Colonic mucosa (tissue), 4 donors: ENCODE measurements at regions of chr12 and their contacts with region 1.

Region 1: GRCh38 chr12:21657326-21658077 is at the start of gene LDHB:
- DNase-seq: peak; percentile 97
- H3K4me3 ChIP-seq: peak within 1 kb of the TSS; percentile 85
- H3K27ac ChIP-seq: peak within 1 kb of the TSS; percentile 82
- H3K4me1 ChIP-seq: no peaks in the 10 kb centered on the region
- H3K27me3 ChIP-seq: no peaks in the 10 kb centered on the region
- CTCF ChIP-seq: no peak
- total RNA-seq, gene LDHB: 330 to 565 TPM

Region 2: DNA sequence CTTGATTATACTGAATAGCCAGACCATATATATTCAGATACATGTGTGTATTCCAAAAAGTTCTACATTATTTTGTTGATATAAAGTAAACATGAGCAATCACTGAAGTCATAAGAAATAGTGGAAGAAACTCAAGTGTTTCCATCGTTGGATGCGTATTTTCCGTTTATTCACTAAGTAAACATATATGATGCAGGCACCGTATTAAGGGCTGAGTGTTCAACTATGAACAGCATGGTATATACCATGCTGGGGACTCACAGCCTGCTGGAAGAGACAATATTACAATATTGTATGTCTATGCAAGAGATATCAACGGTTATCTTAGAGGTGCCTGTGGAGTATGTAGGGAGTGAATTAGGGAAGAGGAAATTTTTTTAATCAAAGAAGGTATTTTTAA is 218.9 kb before region 1 on chr12:
- intact Hi-C with region 1: loop called (anchors 10 kb)
- DNase-seq: no peak
- H3K4me3 ChIP-seq: peak overlapping the region; percentile 79
- H3K27ac ChIP-seq: peak overlapping the region; percentile 84
- H3K4me1 ChIP-seq: no peaks in the 10 kb centered on the region
- H3K27me3 ChIP-seq: no peaks in the 10 kb centered on the region
- CTCF ChIP-seq: no peak